Heart right ventricle (tissue), 16 donors: ENCODE measurements at regions of chr1 and their contacts with region 1.

Region 1: GRCh38 chr1:234544087-234544579 is 65.2 kb upstream of the TARBP1 start:
- DNase-seq: peak; percentile 49 to 85
- ATAC-seq: peak; percentile 70 to 90 (median 85)
- H3K4me3 ChIP-seq: no peak overlapping the region
- H3K27ac ChIP-seq: peak overlapping the region; percentile 32 to 94 (median 88)
- H3K4me1 ChIP-seq: peaks cover 30 to 82% (median 54%) of the 10 kb centered on the region in 9 donors
- H3K27me3 ChIP-seq: no peaks in the 10 kb centered on the region
- CTCF ChIP-seq: no peak

Region 2: GRCh38 chr1:234473118-234473517 is 71.0 kb before region 1 on chr1:
- intact Hi-C with region 1: no loop called
- DNase-seq: no peak
- ATAC-seq: no peak
- H3K4me3 ChIP-seq: no peak overlapping the region
- H3K27ac ChIP-seq: peak overlapping the region in 3 of 10 donors; percentile 43 to 76 (median 48)
- H3K4me1 ChIP-seq: peaks cover 0 to 52% (median 11%) of the 10 kb centered on the region in 9 donors
- H3K27me3 ChIP-seq: no peaks in the 10 kb centered on the region
- CTCF ChIP-seq: no peak

Region 3: DNA sequence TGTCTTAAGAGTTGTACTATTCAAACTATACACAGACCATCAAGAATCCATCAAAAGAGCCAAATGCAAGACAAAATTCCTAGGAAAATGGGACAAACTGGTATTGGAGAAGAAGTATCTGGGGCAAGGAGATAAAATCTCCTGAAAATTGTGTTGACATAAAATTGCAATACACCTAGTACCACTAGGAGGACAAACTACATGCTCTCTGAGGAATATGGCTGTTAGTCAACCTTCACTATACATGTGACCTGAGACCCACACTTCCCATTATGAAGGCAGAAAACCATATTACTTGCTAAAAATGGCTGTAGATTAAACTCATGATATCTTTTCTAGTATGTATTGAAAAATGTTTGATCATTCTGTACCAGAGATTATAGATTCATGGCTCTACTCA is 35.8 kb after region 1 on chr1:
- intact Hi-C with region 1: loop called in 4 of 10 experiments (anchors 2 to 5 kb)
- DNase-seq: no peak
- ATAC-seq: no peak
- H3K4me3 ChIP-seq: no peak overlapping the region
- H3K27ac ChIP-seq: no peak overlapping the region
- H3K4me1 ChIP-seq: peaks cover 0 to 35% (median 27%) of the 10 kb centered on the region in 9 donors
- H3K27me3 ChIP-seq: no peaks in the 10 kb centered on the region
- CTCF ChIP-seq: peak in 2 of 9 donors; percentile 18 to 26

Region 4: GRCh38 chr1:234589854-234590620 is 45.9 kb after region 1 on chr1:
- intact Hi-C with region 1: loop called in 4 of 10 experiments (anchors 5 to 10 kb)
- DNase-seq: peak in 1 of 2 donors; percentile 39
- ATAC-seq: peak; percentile 40 to 83 (median 66)
- H3K4me3 ChIP-seq: no peak overlapping the region
- H3K27ac ChIP-seq: peak overlapping the region in 8 of 10 donors; percentile 31 to 74 (median 64)
- H3K4me1 ChIP-seq: peaks cover 4 to 44% (median 16%) of the 10 kb centered on the region in 9 donors
- H3K27me3 ChIP-seq: no peaks in the 10 kb centered on the region
- CTCF ChIP-seq: no peak